HepG2 (cell line): ENCODE measurements at regions of chr18 and their contacts with region 1.

Region 1: GRCh38 chr18:12376718-12377555 is at the start of gene AFG3L2:
- DNase-seq: peak; percentile 96
- ATAC-seq: peak; percentile 81
- H3K4me3 ChIP-seq: peak within 1 kb of the TSS; percentile 68 to 93 (median 78)
- H3K27ac ChIP-seq: peak within 1 kb of the TSS; percentile 98
- H3K4me1 ChIP-seq: peaks cover 38% of the 10 kb centered on the region
- H3K27me3 ChIP-seq: no peaks in the 10 kb centered on the region; a peak in 1 of 5 replicates
- CTCF ChIP-seq: no peak
- EP300 ChIP-seq: no peak; a peak in 1 of 4 replicates
- POLR2A ChIP-seq: peak; percentile 75 to 86; a peak in 3 of 4 replicates
- RAD21 ChIP-seq: peak; percentile 79
- total RNA-seq, gene AFG3L2: 86.3 and 86.9 TPM in 2 replicates

Region 2: DNA sequence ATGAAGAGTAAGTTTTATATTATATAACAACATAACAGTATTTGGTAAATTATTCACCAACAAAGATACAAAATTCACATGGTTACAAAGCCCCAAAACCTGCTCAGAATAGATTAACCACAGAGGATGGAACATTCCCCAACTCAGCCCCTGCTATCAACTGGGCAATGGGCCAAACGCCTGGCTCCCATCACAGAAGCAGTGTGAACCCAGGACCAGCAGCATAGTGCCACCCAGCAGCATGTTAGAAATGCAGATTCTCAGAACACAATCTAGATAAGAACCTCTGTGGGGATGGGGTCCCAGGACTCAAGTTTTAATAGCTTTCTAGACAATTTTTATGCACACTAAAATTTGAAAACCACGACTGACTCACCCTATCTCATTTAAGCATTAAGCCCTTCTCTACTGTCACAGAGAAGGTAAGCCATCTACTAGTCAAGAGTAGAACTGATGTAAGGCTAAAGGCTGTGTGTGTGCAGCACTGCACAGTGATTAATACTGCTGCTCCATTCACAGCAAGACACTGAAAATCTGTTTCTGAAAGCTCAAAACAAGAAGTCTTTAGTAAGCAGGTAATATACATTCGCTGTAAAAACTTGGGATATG is 15.1 kb before region 1 on chr18:
- CTCF ChIA-PET with region 1: no interaction called
- POLR2A ChIA-PET with region 1: no interaction called
- in situ Hi-C with region 1: no loop called
- intact Hi-C with region 1: no loop called
- DNase-seq: no peak
- ATAC-seq: no peak
- H3K4me3 ChIP-seq: no peak overlapping the region
- H3K27ac ChIP-seq: no peak overlapping the region
- H3K4me1 ChIP-seq: no peaks in the 10 kb centered on the region
- H3K27me3 ChIP-seq: no peaks in the 10 kb centered on the region
- CTCF ChIP-seq: no peak
- EP300 ChIP-seq: no peak
- POLR2A ChIP-seq: no peak
- RAD21 ChIP-seq: no peak

Region 3: DNA sequence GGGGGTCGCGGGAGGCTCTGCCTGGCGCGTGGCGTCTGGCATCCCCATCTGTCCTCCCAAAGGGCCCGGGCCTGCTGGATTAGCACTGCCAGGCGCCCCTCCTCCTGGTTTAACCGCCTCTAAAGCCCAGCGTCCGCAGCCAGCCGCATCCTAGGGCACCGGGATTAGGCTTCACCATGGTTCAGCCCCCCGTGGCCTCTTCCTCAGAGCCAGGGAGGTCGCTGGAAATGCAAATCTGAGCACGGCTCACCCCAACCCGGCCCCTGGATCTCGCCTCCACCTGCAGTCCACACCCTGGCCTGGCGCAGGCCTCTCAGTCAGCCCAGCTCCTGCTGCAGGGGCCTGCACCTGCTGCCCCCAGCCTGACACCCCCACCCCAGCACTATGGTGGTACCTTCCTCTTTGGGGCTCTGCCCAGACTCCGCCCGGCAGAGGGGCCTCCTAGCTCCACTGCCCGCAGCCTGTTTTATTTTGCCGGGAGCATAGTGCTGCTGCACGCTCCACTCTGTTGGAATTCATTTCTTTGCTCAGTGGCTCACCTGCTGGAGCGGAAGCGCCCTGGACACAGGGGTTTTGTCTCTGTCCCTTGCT is 44.0 kb after region 1 on chr18:
- CTCF ChIA-PET with region 1: no interaction called
- POLR2A ChIA-PET with region 1: interaction called, 15 read pairs
- in situ Hi-C with region 1: no loop called
- intact Hi-C with region 1: no loop called
- DNase-seq: peak; percentile 66
- ATAC-seq: peak; percentile 79
- H3K4me3 ChIP-seq: peak overlapping the region; percentile 76 to 87 (median 86)
- H3K27ac ChIP-seq: peak overlapping the region; percentile 92
- H3K4me1 ChIP-seq: peaks cover 52% of the 10 kb centered on the region
- H3K27me3 ChIP-seq: no peaks in the 10 kb centered on the region
- CTCF ChIP-seq: no peak; the same call in 1 of the 2 replicates
- EP300 ChIP-seq: no peak
- POLR2A ChIP-seq: peak; percentile 56 to 65
- RAD21 ChIP-seq: no peak

Region 4: DNA sequence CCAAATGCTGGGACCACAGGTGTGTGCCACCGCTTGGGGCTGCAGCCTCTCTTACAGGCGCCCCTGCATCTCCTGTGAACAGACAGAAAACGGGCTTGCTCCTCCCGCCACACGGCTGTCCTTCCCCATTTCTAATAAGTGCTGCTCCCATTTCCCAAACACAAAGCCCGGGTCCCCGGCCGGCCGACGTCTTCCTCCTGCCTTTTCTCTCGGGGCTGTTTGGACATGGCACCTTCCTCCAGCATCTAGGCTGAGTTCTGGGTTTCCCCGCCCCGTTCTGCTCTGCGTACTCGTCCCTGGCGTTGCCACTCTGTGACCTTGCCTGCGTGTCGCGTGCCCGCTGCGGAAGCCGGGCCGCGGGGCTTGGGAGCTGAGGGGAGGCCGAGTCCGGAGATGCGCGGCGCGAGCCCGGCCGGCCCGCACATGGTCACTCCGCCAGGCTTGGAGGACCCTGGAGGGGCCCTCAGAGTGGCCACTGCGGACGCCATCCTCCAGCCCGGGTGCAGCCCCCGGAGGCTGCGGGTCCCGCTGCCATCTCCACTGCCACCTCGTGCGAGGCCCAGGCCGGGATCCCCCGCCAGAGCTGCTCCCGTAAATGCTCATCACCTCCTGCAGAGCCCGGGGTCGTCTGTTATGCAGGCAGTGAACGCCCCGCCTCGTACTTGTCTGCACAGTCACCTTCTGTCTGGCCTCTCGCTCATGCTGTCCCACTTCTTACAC is 57.1 kb after region 1 on chr18:
- CTCF ChIA-PET with region 1: no interaction called
- POLR2A ChIA-PET with region 1: no interaction called
- in situ Hi-C with region 1: no loop called
- intact Hi-C with region 1: no loop called
- DNase-seq: no peak
- ATAC-seq: no peak
- H3K4me3 ChIP-seq: no peak overlapping the region
- H3K27ac ChIP-seq: no peak overlapping the region
- H3K4me1 ChIP-seq: no peaks in the 10 kb centered on the region
- H3K27me3 ChIP-seq: no peaks in the 10 kb centered on the region
- CTCF ChIP-seq: no peak
- EP300 ChIP-seq: no peak
- POLR2A ChIP-seq: no peak
- RAD21 ChIP-seq: no peak

Region 5: DNA sequence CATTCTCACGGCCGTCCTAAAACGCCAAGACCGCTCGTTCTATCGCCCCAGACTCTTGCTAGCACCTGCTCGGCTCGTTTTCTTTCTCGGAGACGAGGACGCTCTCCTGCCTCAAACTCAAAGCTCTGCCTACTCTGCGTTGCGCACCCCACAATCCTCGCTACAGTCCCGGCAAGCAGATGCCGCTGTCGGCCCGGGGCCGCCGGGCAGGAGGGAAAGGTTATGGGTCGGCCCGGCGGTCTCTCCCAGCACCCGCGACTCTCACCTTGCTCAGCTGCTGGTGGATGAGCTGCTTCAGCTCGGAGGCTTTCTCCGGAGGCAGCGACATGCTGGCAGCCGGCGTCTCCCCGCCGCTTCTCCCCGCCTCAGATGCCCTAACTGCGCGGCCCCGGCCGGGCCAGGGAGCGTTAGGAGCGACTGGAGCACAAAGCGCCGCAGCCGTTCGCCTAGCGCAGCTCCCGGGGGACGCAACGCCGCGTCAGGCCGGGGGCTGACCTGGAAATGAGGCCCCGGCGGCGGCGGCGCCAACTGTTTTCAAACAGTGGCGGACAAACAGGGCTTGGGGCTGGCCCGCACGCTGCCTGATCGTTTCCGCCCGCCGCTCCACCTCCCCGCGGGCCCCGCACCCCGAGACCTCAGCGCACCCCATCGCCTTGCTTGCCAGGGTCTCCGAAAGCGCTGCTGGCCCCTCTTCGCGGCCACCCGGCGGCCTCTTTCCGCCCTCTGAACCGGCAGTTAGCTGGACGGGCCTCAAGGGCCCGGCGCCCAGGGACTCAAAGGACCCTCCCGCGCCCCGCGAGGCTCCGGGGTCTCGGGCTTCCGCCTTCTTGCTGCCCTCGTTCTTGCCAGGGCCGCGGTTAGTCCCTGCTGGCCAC is 325.5 kb after region 1 on chr18 and contains the starts of genes CEP76 and PSMG2:
- CTCF ChIA-PET with region 1: no interaction called
- POLR2A ChIA-PET with region 1: interaction called, 12 read pairs
- in situ Hi-C with region 1: no loop called
- intact Hi-C with region 1: no loop called
- DNase-seq: peak; percentile 81
- ATAC-seq: peak; percentile 96
- H3K4me3 ChIP-seq: peak within 1 kb of the TSS; percentile 91 to 99 (median 93)
- H3K27ac ChIP-seq: peak within 1 kb of the TSS; percentile 89
- H3K4me1 ChIP-seq: peaks cover 57% of the 10 kb centered on the region
- H3K27me3 ChIP-seq: no peaks in the 10 kb centered on the region; a peak in 2 of 5 replicates
- CTCF ChIP-seq: 0 out of 2 replicates have a peak, but pooled peaks have one; percentile 2
- EP300 ChIP-seq: peak in 1 of 2 experiments; percentile 13; a peak in 1 of 4 replicates
- POLR2A ChIP-seq: peak; percentile 82 to 91
- RAD21 ChIP-seq: peak; percentile 43; the same call in 1 of the 2 replicates
- total RNA-seq, gene CEP76: 15.1 and 19.4 TPM in 2 replicates
- total RNA-seq, gene PSMG2: 94.8 and 133 TPM in 2 replicates

Region 6: GRCh38 chr18:12947355-12948041 is 570.6 kb after region 1 on chr18 and contains the start of gene SEH1L:
- CTCF ChIA-PET with region 1: no interaction called
- POLR2A ChIA-PET with region 1: interaction called, 6 read pairs
- in situ Hi-C with region 1: loop called (anchors 25 kb)
- intact Hi-C with region 1: loop called (anchors 10 kb)
- DNase-seq: peak; percentile 87
- ATAC-seq: peak; percentile 91
- H3K4me3 ChIP-seq: peak within 1 kb of the TSS; percentile 73 to 84 (median 81)
- H3K27ac ChIP-seq: peak within 1 kb of the TSS; percentile 99
- H3K4me1 ChIP-seq: peaks cover 50% of the 10 kb centered on the region
- H3K27me3 ChIP-seq: no peaks in the 10 kb centered on the region
- CTCF ChIP-seq: no peak
- EP300 ChIP-seq: no peak
- POLR2A ChIP-seq: no peak; a peak in 2 of 4 replicates
- RAD21 ChIP-seq: 0 out of 2 replicates have a peak, but pooled peaks have one; percentile 10
- total RNA-seq, gene SEH1L: 59.6 and 96.2 TPM in 2 replicates